ENCODE measurements at regions of chr1 and their contacts with region 1.

Region 1: DNA sequence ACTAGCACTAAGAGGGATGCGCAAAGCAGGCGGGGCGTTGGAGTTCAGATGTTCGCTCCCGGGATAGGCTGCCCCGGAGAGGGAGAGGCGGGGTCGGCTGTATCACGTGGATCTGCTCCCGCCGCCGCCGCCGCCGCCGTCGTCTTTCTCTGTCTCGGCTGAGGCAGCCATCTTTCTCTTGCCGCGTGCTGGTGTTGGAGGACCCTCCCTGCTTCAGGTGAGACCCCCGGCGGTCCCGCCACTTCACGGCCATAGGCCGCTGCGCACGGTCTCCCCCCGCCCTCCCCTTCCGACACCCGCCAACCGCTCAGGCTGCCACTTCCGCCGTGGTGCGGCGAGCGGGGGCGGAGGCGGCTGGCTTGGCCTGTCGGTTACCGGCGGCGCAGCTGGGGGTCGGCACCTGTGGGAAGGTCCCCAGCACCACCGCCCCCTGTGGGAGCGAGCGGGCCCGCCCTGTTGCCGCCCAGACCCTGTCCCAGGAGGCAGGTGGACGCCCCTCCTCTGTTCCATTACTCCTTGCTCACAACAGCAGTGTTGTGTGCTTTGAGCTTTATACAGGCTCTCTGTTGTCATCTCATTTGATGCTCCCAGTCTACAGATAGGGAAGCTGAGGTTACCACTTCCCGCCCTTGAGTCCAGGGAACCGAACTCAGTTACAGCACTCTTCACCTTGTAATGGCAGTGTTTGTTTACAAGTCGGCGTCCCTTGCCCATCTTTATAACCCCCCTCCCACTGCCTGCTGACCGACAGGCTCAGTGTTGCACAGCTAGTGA is at the start of gene BTF3L4:
- DNase-seq: peak; percentile 87
- ATAC-seq: peak; percentile 88
- H3K4me3 Mint-ChIP-seq: peak within 1 kb of the TSS; percentile 100
- H3K27ac Mint-ChIP-seq: peak within 1 kb of the TSS; percentile 98
- H3K4me1 Mint-ChIP-seq: peaks cover 48% of the 10 kb centered on the region
- H3K27me3 Mint-ChIP-seq: no peaks in the 10 kb centered on the region
- CTCF ChIP-seq: no peak
- total RNA-seq, gene BTF3L4: 32.8 and 36.2 TPM in 2 replicates

Region 2: DNA sequence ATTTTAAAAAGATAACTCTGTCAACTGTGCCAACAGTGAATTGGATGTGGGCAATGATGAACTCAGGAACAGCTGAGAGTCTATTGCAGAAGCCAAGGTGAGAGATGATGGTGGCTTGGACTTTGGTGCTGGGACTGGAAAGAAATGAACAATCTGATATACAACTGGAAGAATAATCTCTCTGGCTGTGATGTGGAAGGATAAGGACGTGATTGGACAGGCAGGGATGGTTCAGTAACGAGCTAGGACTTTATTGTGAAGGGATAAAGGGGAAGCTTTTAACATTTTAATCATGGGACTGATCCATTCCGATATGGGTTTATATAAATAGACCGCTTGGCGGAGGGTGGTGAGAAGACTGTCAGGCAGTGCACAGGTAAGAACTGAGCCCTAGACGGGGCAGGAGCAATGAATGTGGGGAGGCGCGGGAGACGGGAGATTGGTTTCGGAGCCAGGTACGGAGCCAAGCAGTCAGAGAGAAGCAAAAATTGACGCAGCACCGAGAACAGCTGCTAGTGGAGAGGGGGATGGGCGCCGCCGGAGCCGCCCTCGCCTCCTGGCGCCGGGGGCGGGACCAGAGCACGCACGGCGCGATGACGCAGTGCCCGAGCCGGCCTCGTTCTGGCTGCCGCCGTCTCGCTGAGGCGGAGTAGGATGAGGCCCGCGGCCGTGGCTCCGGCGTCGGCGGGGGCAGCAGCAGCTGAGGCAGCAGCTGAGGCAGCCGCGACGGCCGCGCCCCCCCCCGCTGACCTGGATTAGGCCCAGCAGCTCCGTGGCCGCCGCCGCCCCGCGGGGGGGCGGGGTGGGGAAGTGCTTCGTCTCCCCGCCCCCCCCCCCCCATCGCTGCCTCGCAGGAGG is 820.4 kb before region 1 on chr1 and contains the start of gene RNF11:
- CTCF ChIA-PET with region 1: no interaction called
- POLR2A ChIA-PET with region 1: no interaction called
- intact Hi-C with region 1: loop called (anchors 5 kb)
- DNase-seq: peak; percentile 94
- ATAC-seq: peak; percentile 74
- H3K4me3 Mint-ChIP-seq: peak within 1 kb of the TSS; percentile 92
- H3K27ac Mint-ChIP-seq: peak within 1 kb of the TSS; percentile 93
- H3K4me1 Mint-ChIP-seq: peaks cover 24% of the 10 kb centered on the region
- H3K27me3 Mint-ChIP-seq: peaks cover 4% of the 10 kb centered on the region
- CTCF ChIP-seq: no peak
- total RNA-seq, gene RNF11: 15.3 and 17.1 TPM in 2 replicates

Region 3: DNA sequence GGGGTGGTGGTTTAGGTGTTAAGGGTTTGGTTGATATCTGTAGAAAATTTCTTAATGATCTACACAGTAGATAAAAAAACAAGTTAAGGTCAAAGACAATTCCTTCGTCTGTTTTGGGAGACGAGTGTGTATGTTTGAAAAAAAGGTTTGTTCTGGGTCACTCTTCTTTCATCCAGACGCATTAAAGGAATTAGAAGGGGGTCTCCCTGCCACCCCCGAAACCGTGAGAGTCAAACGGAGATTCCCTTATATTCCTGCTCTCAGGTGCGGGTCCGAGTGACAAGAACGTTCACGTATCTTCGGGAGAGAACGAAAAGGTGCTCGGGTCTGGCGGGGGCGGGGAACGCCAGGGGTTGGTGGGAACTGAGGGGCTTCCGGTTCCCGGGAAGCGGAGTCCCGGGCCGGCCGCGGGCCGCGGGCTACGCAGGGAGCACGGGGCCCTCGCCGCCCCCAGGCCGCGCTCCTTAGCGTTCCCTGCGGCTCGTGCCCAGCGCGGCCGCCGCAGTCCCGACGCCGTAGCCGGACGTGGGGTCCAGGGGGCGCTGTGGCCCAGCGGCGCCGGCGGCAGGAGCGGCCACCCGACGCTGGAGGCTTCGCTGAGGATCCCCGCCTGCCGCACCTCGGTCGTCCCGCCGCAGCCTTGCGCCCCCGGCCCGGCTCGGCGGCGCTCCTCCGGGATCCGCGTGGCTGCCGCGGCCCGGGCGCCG is 85.3 kb after region 1 on chr1 and contains the start of gene ZFYVE9:
- CTCF ChIA-PET with region 1: no interaction called
- POLR2A ChIA-PET with region 1: interaction called, 3 read pairs
- intact Hi-C with region 1: loop called (anchors 1 kb)
- DNase-seq: peak; percentile 77
- ATAC-seq: peak; percentile 84
- H3K4me3 Mint-ChIP-seq: peak within 1 kb of the TSS; percentile 81
- H3K27ac Mint-ChIP-seq: peak within 1 kb of the TSS; percentile 9
- H3K4me1 Mint-ChIP-seq: peaks cover 28% of the 10 kb centered on the region
- H3K27me3 Mint-ChIP-seq: peaks cover 18% of the 10 kb centered on the region
- CTCF ChIP-seq: no peak
- total RNA-seq, gene ZFYVE9: 3.2 and 3.3 TPM in 2 replicates

Region 4: DNA sequence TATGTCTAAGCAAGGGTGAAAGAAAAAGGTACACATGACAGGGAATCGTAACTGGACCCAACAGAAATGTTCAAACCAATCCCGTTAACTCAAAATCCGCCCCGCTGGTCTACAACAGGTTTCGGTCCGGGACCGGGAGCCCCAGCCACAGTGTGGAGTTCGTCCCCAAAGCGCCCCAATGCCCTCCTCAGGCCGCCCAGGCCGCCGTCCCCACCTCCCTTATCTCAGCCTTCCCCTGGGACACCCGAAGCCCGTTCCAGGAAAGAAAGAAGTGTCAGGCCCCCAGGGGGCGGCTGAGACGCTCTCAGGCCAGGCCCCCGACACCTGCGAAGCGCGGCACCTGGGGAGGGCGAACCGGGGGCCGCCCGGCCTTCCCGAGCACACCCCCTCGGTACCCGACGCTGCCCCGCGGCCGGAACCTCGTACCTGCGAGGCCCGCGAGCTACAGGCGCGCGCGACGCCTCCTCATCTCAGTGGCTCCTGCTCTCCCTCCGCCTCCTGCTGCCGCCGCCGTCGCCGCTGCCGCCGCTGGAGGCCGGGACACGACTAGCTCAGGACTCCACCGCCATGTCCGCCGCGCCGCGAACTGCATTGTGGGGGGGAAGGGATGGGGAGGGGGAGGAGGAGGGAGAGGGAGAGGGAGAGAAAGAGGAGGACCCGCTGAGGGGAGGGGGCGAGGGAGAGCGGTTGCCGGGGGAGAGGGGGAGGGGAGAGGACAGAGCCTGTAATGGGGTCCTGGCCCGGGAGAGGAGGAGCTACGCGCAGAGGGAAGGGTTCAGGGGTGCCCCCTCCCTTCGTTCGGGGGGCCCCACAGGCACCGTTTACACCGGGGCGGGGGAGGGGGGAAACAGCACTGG is 496.4 kb after region 1 on chr1 and contains the start of gene TUT4:
- CTCF ChIA-PET with region 1: no interaction called
- POLR2A ChIA-PET with region 1: no interaction called
- intact Hi-C with region 1: loop called (anchors 10 kb)
- DNase-seq: peak; percentile 74
- ATAC-seq: peak; percentile 53
- H3K4me3 Mint-ChIP-seq: no peak within 1 kb of the TSS
- H3K27ac Mint-ChIP-seq: peak within 1 kb of the TSS; percentile 83
- H3K4me1 Mint-ChIP-seq: peaks cover 39% of the 10 kb centered on the region
- H3K27me3 Mint-ChIP-seq: no peaks in the 10 kb centered on the region
- CTCF ChIP-seq: no peak
- total RNA-seq, gene TUT4: 143 and 158 TPM in 2 replicates

Region 5: GRCh38 chr1:52726265-52727113 is 670.1 kb after region 1 on chr1 and contains the start of gene ZYG11B:
- CTCF ChIA-PET with region 1: no interaction called
- POLR2A ChIA-PET with region 1: no interaction called
- intact Hi-C with region 1: loop called (anchors 1 kb)
- DNase-seq: peak; percentile 90
- ATAC-seq: peak; percentile 94
- H3K4me3 Mint-ChIP-seq: peak within 1 kb of the TSS; percentile 91
- H3K27ac Mint-ChIP-seq: peak within 1 kb of the TSS; percentile 85
- H3K4me1 Mint-ChIP-seq: peaks cover 35% of the 10 kb centered on the region
- H3K27me3 Mint-ChIP-seq: no peaks in the 10 kb centered on the region
- CTCF ChIP-seq: no peak
- total RNA-seq, gene ZYG11B: 14.9 and 17.3 TPM in 2 replicates

Region 6: DNA sequence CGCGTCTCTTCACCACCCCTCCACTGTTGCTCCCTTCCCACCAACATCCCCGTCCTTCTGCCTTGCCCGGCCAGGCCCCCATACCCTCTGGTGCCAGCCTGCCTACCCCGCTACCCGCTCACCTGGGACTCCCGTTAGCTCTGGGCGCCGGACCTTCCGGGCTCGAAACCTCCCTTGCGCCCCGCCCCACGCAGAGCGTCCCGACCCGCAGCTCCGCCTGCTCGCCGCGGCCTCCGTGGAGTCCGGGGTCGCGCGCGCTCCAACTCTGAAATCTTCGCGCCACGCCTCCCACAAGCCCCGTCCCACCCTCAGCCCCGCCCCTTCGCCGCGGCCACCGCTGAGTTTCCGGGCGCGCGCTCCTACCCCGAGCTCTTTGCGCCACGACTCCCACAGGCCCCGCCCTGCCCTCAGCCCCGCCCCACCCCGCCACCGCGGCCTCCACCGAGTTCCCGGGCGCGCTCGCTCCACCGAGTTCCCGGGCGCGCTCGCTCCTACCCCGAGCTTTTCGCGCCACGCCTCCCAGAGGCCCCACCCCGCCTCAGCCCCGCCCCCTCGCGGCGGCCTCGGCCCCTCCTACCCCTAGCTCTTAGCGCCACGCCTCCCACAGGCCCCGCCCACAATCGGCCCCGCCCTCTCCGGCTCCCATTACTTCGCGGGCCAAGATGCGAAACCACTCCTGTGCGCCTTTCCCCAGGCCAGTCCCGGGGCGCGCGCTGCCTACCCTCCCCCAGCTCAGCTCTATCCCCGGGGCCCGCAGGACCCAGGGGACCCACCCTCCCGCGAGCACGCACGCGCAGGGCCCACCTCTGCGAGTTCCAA is 1889.3 kb after region 1 on chr1 and contains the start of gene IFT25:
- CTCF ChIA-PET with region 1: no interaction called
- POLR2A ChIA-PET with region 1: no interaction called
- intact Hi-C with region 1: loop called (anchors 5 kb)
- DNase-seq: peak; percentile 100
- ATAC-seq: peak; percentile 81
- H3K4me3 Mint-ChIP-seq: peak within 1 kb of the TSS; percentile 98
- H3K27ac Mint-ChIP-seq: peak within 1 kb of the TSS; percentile 92
- H3K4me1 Mint-ChIP-seq: peaks cover 37% of the 10 kb centered on the region
- H3K27me3 Mint-ChIP-seq: no peaks in the 10 kb centered on the region
- CTCF ChIP-seq: no peak
- total RNA-seq, gene IFT25: 38.0 and 41.0 TPM in 2 replicates

Measured in activated B cell treated with CpG ODN at 0.5 μM for 24 hours (primary cell).